CD8-positive, alpha-beta memory T cell (primary cell): ENCODE measurements at regions of chr5 and their contacts with region 1.

Region 1: GRCh38 chr5:79133657-79134451 is 22.2 kb downstream of the BHMT start:
- DNase-seq: peak; percentile 12 to 71 (median 33)
- H3K4me3 ChIP-seq: peak overlapping the region; percentile 15
- H3K4me3 Mint-ChIP-seq: peak overlapping the region in 6 of 7 donors; percentile 38 to 79 (median 68)
- H3K27ac ChIP-seq: no peak overlapping the region
- H3K27ac Mint-ChIP-seq: peak overlapping the region in 1 of 8 donors; percentile 16
- H3K4me1 ChIP-seq: peaks cover 9% of the 10 kb centered on the region
- H3K4me1 Mint-ChIP-seq: peaks cover 8 to 11% (median 9%) of the 10 kb centered on the region in 3 donors
- H3K27me3 ChIP-seq: no peaks in the 10 kb centered on the region
- H3K27me3 Mint-ChIP-seq: peaks cover 5 to 8% of the 10 kb centered on the region in 2 donors

Region 2: GRCh38 chr5:78661691-78662090 is 472.2 kb before region 1 on chr5:
- CTCF ChIA-PET with region 1: no interaction called
- POLR2A ChIA-PET with region 1: no interaction called
- DNase-seq: no peak
- H3K4me3 ChIP-seq: no peak overlapping the region
- H3K4me3 Mint-ChIP-seq: no peak overlapping the region
- H3K27ac ChIP-seq: no peak overlapping the region
- H3K27ac Mint-ChIP-seq: no peak overlapping the region
- H3K4me1 ChIP-seq: no peaks in the 10 kb centered on the region
- H3K4me1 Mint-ChIP-seq: no peaks in the 10 kb centered on the region
- H3K27me3 ChIP-seq: no peaks in the 10 kb centered on the region
- H3K27me3 Mint-ChIP-seq: peaks cover 4 to 29% of the 10 kb centered on the region in 2 donors

Region 3: GRCh38 chr5:78964887-78965286 is 169.0 kb before region 1 on chr5:
- CTCF ChIA-PET with region 1: no interaction called
- POLR2A ChIA-PET with region 1: no interaction called
- DNase-seq: no peak
- H3K4me3 ChIP-seq: no peak overlapping the region
- H3K4me3 Mint-ChIP-seq: no peak overlapping the region
- H3K27ac ChIP-seq: no peak overlapping the region
- H3K27ac Mint-ChIP-seq: no peak overlapping the region
- H3K4me1 ChIP-seq: no peaks in the 10 kb centered on the region
- H3K4me1 Mint-ChIP-seq: no peaks in the 10 kb centered on the region
- H3K27me3 ChIP-seq: no peaks in the 10 kb centered on the region
- H3K27me3 Mint-ChIP-seq: no peaks in the 10 kb centered on the region

Region 4: DNA sequence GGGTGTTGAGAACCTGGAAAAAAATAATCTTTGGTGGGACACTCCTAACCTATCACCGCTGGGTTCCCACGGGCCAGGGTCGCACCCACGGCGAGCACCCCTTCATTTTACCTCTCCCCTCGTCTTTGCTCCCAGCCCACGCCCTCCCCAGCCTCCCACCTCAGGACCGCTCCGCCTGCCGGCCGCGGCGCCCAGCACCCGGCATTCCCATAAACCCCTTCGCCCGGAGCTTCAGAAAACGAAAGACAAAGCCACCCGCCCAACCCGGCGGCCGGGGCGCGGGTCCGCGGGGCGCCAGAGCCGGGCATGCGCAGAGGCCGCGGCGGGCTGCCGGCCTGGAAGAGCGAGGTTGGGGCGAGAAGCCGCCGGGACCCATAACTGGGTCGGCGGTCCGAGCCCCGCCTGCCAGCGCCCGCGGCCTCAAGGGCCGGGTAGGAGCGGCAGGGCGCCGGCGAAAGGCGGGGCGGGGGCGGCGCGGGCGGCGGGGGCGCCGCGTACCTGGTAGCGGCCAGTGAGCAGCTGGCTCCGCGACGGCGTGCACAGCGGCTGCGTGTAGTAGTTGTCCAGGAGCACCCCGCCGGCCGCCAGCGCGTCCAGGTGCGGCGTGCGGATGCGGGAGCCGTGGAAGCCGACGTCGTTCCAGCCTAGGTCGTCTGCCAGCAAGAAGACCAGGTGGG is 149.3 kb before region 1 on chr5:
- CTCF ChIA-PET with region 1: interaction called, 14 read pairs
- POLR2A ChIA-PET with region 1: interaction called, 5 read pairs
- DNase-seq: peak; percentile 69 to 84 (median 78)
- H3K4me3 ChIP-seq: peak overlapping the region; percentile 76
- H3K4me3 Mint-ChIP-seq: peak overlapping the region; percentile 84 to 95 (median 92)
- H3K27ac ChIP-seq: peak overlapping the region; percentile 72
- H3K27ac Mint-ChIP-seq: peak overlapping the region; percentile 87 to 99 (median 90)
- H3K4me1 ChIP-seq: peaks cover 4% of the 10 kb centered on the region
- H3K4me1 Mint-ChIP-seq: peaks cover 21 to 35% (median 27%) of the 10 kb centered on the region in 3 donors
- H3K27me3 ChIP-seq: no peaks in the 10 kb centered on the region
- H3K27me3 Mint-ChIP-seq: no peaks in the 10 kb centered on the region

Region 5: GRCh38 chr5:79025054-79025472 is 108.8 kb before region 1 on chr5:
- CTCF ChIA-PET with region 1: interaction called, 20 read pairs
- POLR2A ChIA-PET with region 1: no interaction called
- DNase-seq: peak; percentile 16 to 53 (median 30)
- H3K4me3 ChIP-seq: no peak overlapping the region
- H3K4me3 Mint-ChIP-seq: peak overlapping the region in 5 of 7 donors; percentile 47 to 83 (median 65)
- H3K27ac ChIP-seq: no peak overlapping the region
- H3K27ac Mint-ChIP-seq: no peak overlapping the region
- H3K4me1 ChIP-seq: no peaks in the 10 kb centered on the region
- H3K4me1 Mint-ChIP-seq: peaks cover 12 to 13% (median 12%) of the 10 kb centered on the region in 3 donors
- H3K27me3 ChIP-seq: peaks cover 13% of the 10 kb centered on the region
- H3K27me3 Mint-ChIP-seq: peaks cover 12 to 70% of the 10 kb centered on the region in 2 donors

Region 6: GRCh38 chr5:79120216-79120615 is 13.6 kb before region 1 on chr5:
- CTCF ChIA-PET with region 1: interaction called, 17 read pairs
- POLR2A ChIA-PET with region 1: no interaction called
- DNase-seq: no peak
- H3K4me3 ChIP-seq: no peak overlapping the region
- H3K4me3 Mint-ChIP-seq: no peak overlapping the region
- H3K27ac ChIP-seq: no peak overlapping the region
- H3K27ac Mint-ChIP-seq: no peak overlapping the region
- H3K4me1 ChIP-seq: no peaks in the 10 kb centered on the region
- H3K4me1 Mint-ChIP-seq: no peaks in the 10 kb centered on the region
- H3K27me3 ChIP-seq: peaks cover 5% of the 10 kb centered on the region
- H3K27me3 Mint-ChIP-seq: peaks cover 2 to 16% of the 10 kb centered on the region in 2 donors

Region 7: GRCh38 chr5:79464695-79465332 is 331.0 kb after region 1 on chr5:
- CTCF ChIA-PET with region 1: interaction called, 10 read pairs
- POLR2A ChIA-PET with region 1: no interaction called
- DNase-seq: peak in 2 of 5 donors; percentile 4 to 23
- H3K4me3 ChIP-seq: no peak overlapping the region
- H3K4me3 Mint-ChIP-seq: no peak overlapping the region
- H3K27ac ChIP-seq: no peak overlapping the region
- H3K27ac Mint-ChIP-seq: no peak overlapping the region
- H3K4me1 ChIP-seq: no peaks in the 10 kb centered on the region
- H3K4me1 Mint-ChIP-seq: peaks cover 2 to 4% (median 4%) of the 10 kb centered on the region in 3 donors
- H3K27me3 ChIP-seq: no peaks in the 10 kb centered on the region
- H3K27me3 Mint-ChIP-seq: peaks cover 0 to 9% of the 10 kb centered on the region in 2 donors